ENCODE measurements at regions of chr3 and their contacts with region 1.

Region 1: GRCh38 chr3:68912376-68912775 is 20.0 kb downstream of the TAFA4 start:
- DNase-seq: no peak
- ATAC-seq: no peak
- H3K4me3 Mint-ChIP-seq: no peak overlapping the region
- H3K27ac Mint-ChIP-seq: no peak overlapping the region
- H3K4me1 Mint-ChIP-seq: peaks cover 26% of the 10 kb centered on the region
- H3K27me3 Mint-ChIP-seq: no peaks in the 10 kb centered on the region; the same call in 1 of the 2 replicates
- CTCF ChIP-seq: no peak

Region 2: DNA sequence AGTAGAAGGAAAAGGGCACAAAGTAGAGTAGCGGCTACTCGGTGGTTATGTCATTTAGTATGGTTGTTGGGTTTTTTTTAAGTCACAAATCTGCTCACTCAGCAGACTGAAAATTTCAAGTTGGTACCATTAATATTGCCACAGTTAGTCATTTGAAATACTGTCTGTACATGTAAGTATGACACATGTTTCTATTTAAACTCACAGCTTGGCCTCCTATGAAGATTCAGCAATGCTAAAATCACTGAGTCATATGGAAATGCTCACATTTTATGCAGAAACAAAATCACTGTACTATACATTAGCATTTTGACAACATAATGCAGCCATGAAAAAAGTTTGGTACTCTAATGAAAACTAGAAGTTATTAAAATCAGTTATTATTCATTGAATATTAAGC is 551.9 kb before region 1 on chr3:
- CTCF ChIA-PET with region 1: no interaction called
- POLR2A ChIA-PET with region 1: no interaction called
- DNase-seq: no peak
- ATAC-seq: no peak
- H3K4me3 Mint-ChIP-seq: no peak overlapping the region
- H3K27ac Mint-ChIP-seq: no peak overlapping the region
- H3K4me1 Mint-ChIP-seq: no peaks in the 10 kb centered on the region
- H3K27me3 Mint-ChIP-seq: no peaks in the 10 kb centered on the region
- CTCF ChIP-seq: no peak

Region 3: DNA sequence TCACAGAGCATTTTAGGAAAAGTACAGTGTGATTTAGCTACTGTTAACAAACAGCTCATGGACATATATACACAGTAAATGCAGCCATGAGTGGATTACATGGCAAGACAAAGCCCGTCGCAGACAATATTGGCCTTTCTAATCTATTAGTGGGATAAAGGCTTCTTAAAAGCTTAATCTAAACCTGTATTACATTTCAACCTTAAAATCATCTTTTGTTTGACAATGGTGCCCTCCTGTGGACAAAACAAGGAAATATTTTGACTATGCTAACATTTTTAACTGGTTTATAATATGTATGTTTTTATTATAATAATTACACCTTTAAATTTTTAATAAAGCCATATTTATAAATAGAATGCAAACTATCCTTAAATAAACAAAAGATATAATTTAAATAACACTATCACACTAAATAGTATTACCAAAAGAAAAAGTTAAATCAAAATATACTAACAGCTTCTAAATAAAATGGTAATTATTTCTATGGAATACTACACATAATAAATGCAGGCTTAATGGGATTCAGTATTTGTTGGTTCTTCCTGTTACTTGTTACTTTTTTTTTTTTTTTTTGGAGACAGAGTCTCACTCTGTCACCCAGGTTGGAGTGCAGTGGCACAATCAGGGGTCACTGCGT is 18.7 kb before region 1 on chr3:
- CTCF ChIA-PET with region 1: interaction called, 18 read pairs
- POLR2A ChIA-PET with region 1: no interaction called
- DNase-seq: no peak
- ATAC-seq: no peak
- H3K4me3 Mint-ChIP-seq: no peak overlapping the region
- H3K27ac Mint-ChIP-seq: no peak overlapping the region
- H3K4me1 Mint-ChIP-seq: peaks cover 24% of the 10 kb centered on the region
- H3K27me3 Mint-ChIP-seq: no peaks in the 10 kb centered on the region
- CTCF ChIP-seq: peak; percentile 47

Region 4: GRCh38 chr3:68924897-68925296 is 12.5 kb after region 1 on chr3:
- CTCF ChIA-PET with region 1: no interaction called
- POLR2A ChIA-PET with region 1: no interaction called
- DNase-seq: no peak
- ATAC-seq: no peak
- H3K4me3 Mint-ChIP-seq: no peak overlapping the region
- H3K27ac Mint-ChIP-seq: no peak overlapping the region
- H3K4me1 Mint-ChIP-seq: peaks cover 18% of the 10 kb centered on the region
- H3K27me3 Mint-ChIP-seq: peaks cover 8% of the 10 kb centered on the region
- CTCF ChIP-seq: no peak

Measured in WTC11 (cell line).